Adrenal gland (tissue), 19 donors: ENCODE measurements at regions of chr4 and their contacts with region 1.

Region 1: DNA sequence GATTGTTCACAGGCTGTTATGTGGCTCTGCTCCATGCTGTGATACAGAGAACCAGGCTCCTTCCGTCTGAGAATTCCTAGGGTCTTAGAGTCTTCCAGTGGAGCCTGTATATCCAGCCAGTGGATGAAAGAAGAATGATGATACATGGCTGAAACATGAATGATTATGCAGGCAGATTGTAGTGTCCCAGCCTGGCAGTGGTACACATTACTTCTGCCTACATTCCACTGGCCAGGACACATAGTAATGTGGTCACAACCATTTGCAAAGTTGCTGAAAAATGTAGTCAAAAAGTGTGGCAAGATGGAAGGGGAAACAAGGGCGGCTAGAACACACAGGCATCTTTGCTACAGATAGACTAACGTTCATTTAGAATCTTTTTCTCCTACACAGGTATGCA is 4.5 kb upstream of the GBA3 start:
- DNase-seq: no peak
- H3K4me3 ChIP-seq: no peak overlapping the region
- H3K27ac ChIP-seq: no peak overlapping the region
- H3K4me1 ChIP-seq: no peaks in the 10 kb centered on the region
- H3K27me3 ChIP-seq: no peaks in the 10 kb centered on the region
- CTCF ChIP-seq: no peak
- POLR2A ChIP-seq: no peak

Region 2: GRCh38 chr4:21790438-21791029 is 897.7 kb before region 1 on chr4:
- intact Hi-C with region 1: loop called in 1 of 2 experiments (anchors 5 kb)
- DNase-seq: no peak
- H3K4me3 ChIP-seq: no peak overlapping the region
- H3K27ac ChIP-seq: no peak overlapping the region
- H3K4me1 ChIP-seq: no peaks in the 10 kb centered on the region
- H3K27me3 ChIP-seq: no peaks in the 10 kb centered on the region
- CTCF ChIP-seq: peak; percentile 17 to 56 (median 47)
- POLR2A ChIP-seq: no peak

Region 3: GRCh38 chr4:21802406-21802805 is 885.8 kb before region 1 on chr4:
- intact Hi-C with region 1: loop called in 1 of 2 experiments (anchors 10 kb)
- DNase-seq: no peak
- H3K4me3 ChIP-seq: no peak overlapping the region
- H3K27ac ChIP-seq: no peak overlapping the region
- H3K4me1 ChIP-seq: no peaks in the 10 kb centered on the region
- H3K27me3 ChIP-seq: no peaks in the 10 kb centered on the region
- CTCF ChIP-seq: no peak
- POLR2A ChIP-seq: no peak

Region 4: GRCh38 chr4:22410645-22411247 is 277.5 kb before region 1 on chr4:
- intact Hi-C with region 1: loop called (anchors 5 kb)
- DNase-seq: no peak
- H3K4me3 ChIP-seq: no peak overlapping the region
- H3K27ac ChIP-seq: no peak overlapping the region
- H3K4me1 ChIP-seq: no peaks in the 10 kb centered on the region
- H3K27me3 ChIP-seq: no peaks in the 10 kb centered on the region
- CTCF ChIP-seq: peak; percentile 32 to 76 (median 54)
- POLR2A ChIP-seq: no peak